Activated CD8-positive, alpha-beta T cell treated with anti-CD3 and anti-CD28 coated beads, Interleukin-2, amount 10 ng/mL, durations not matched to agents 7 days and 5 days (primary cell): ENCODE measurements at regions of chr16 and their contacts with region 1.

Region 1: GRCh38 chr16:58345574-58346354 is 46.5 kb upstream of the GINS3 start:
- DNase-seq: no peak
- ATAC-seq: no peak
- H3K4me3 Mint-ChIP-seq: no peak overlapping the region
- H3K27ac Mint-ChIP-seq: no peak overlapping the region
- H3K4me1 Mint-ChIP-seq: peaks cover 3% of the 10 kb centered on the region
- H3K27me3 Mint-ChIP-seq: peaks cover 34% of the 10 kb centered on the region

Region 2: GRCh38 chr16:58317608-58318152 is 28.1 kb before region 1 on chr16:
- CTCF ChIA-PET with region 1: no interaction called
- POLR2A ChIA-PET with region 1: no interaction called
- DNase-seq: no peak
- ATAC-seq: no peak
- H3K4me3 Mint-ChIP-seq: no peak overlapping the region
- H3K27ac Mint-ChIP-seq: no peak overlapping the region
- H3K4me1 Mint-ChIP-seq: no peaks in the 10 kb centered on the region
- H3K27me3 Mint-ChIP-seq: peaks cover 5% of the 10 kb centered on the region

Region 3: DNA sequence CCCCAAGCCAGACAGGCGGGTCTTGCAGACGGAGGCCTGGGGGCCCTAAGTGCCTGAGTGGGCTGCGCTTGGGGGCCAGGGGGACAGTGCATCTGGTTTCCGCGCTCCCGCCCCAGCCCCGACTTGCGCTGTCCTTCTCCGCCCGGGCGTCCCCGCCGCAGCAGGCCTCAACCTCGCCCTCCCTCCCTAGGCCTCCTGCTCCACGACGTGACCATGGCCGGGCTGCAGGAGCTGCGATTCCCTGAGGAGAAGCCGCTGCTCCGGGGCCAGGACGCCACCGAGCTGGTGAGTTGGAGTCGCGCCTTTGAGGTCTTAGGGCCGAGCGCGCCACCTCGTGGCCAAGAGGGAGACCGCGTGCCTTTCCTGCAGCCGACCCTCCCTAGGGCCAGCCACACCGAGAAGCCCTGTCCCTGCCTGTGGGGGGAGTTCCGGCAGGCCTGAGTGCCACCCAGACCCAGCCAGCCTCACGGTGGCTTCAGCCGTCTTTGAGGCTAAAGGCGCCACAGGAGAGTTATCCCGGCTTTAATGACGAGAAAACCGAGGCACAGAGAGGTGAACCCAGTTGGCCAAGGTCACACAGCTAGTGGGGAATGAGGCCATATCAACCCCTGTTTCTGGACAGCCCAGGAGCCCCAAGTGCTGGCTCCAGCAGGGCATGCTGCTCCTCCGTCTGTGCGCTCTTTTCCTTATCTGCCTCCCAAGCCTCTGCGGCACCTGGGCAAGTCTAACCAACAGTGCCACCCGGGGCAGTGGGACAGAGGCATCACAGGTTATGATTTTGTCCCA is 142.0 kb after region 1 on chr16:
- CTCF ChIA-PET with region 1: interaction called, 11 read pairs
- POLR2A ChIA-PET with region 1: no interaction called
- DNase-seq: peak; percentile 79
- ATAC-seq: peak; percentile 90
- H3K4me3 Mint-ChIP-seq: no peak overlapping the region
- H3K27ac Mint-ChIP-seq: no peak overlapping the region
- H3K4me1 Mint-ChIP-seq: no peaks in the 10 kb centered on the region
- H3K27me3 Mint-ChIP-seq: peaks cover 5% of the 10 kb centered on the region

Region 4: GRCh38 chr16:58629572-58630104 is 283.9 kb after region 1 on chr16 and contains the start of gene CNOT1:
- CTCF ChIA-PET with region 1: no interaction called
- POLR2A ChIA-PET with region 1: no interaction called
- DNase-seq: peak; percentile 99
- ATAC-seq: peak; percentile 91
- H3K4me3 Mint-ChIP-seq: peak within 1 kb of the TSS; percentile 100
- H3K27ac Mint-ChIP-seq: peak within 1 kb of the TSS; percentile 100
- H3K4me1 Mint-ChIP-seq: peaks cover 32% of the 10 kb centered on the region
- H3K27me3 Mint-ChIP-seq: no peaks in the 10 kb centered on the region
- total RNA-seq, gene CNOT1: 262 TPM